MCF 10A (cell line): ENCODE measurements at regions of chr1 and their contacts with region 1.

Region 1: GRCh38 chr1:183685112-183685713 is 32.1 kb upstream of the APOBEC4 start:
- DNase-seq: peak; percentile 71
- H3K4me3 Mint-ChIP-seq: no peak overlapping the region
- H3K27ac Mint-ChIP-seq: no peak overlapping the region
- H3K4me1 Mint-ChIP-seq: no peaks in the 10 kb centered on the region
- H3K27me3 Mint-ChIP-seq: no peaks in the 10 kb centered on the region
- CTCF ChIP-seq: peak; percentile 88

Region 2: DNA sequence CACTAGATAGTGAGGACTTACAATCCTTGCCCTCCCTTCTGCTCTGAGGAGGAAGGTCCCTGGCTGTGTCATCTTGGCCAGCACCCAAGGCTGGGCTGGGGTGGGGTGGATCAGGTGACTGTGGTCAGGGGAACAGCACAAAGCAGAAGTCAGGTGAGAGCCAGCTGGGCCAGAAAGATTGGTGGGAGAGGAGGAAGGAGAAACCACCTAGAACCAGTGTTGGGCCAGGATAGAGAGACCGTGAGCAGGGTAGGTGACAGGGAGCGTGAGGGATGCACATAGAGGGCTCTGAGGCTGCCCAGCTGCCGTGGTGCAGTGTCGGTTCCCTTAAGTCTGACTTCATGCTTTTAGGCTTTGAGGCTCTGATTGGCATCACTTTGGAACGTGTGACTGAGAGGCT is 117.6 kb before region 1 on chr1:
- CTCF ChIA-PET with region 1: interaction called, 10 read pairs
- POLR2A ChIA-PET with region 1: no interaction called
- intact Hi-C with region 1: no loop called
- DNase-seq: peak; percentile 71
- H3K4me3 Mint-ChIP-seq: no peak overlapping the region
- H3K27ac Mint-ChIP-seq: peak overlapping the region; percentile 10
- H3K4me1 Mint-ChIP-seq: peaks cover 32% of the 10 kb centered on the region
- H3K27me3 Mint-ChIP-seq: no peaks in the 10 kb centered on the region
- CTCF ChIP-seq: no peak

Region 3: GRCh38 chr1:183635606-183636333 is 49.4 kb before region 1 on chr1 and contains the start of gene ARPC5:
- CTCF ChIA-PET with region 1: interaction called, 21 read pairs
- POLR2A ChIA-PET with region 1: interaction called, 6 read pairs
- intact Hi-C with region 1: no loop called
- DNase-seq: peak; percentile 99
- H3K4me3 Mint-ChIP-seq: peak within 1 kb of the TSS; percentile 100
- H3K27ac Mint-ChIP-seq: peak within 1 kb of the TSS; percentile 97
- H3K4me1 Mint-ChIP-seq: peaks cover 15% of the 10 kb centered on the region
- H3K27me3 Mint-ChIP-seq: no peaks in the 10 kb centered on the region
- CTCF ChIP-seq: no peak
- total RNA-seq, gene ARPC5: 195 and 240 TPM in 2 replicates

Region 4: GRCh38 chr1:183670178-183670577 is 15.0 kb before region 1 on chr1:
- CTCF ChIA-PET with region 1: interaction called, 61 read pairs
- POLR2A ChIA-PET with region 1: interaction called, 5 read pairs
- intact Hi-C with region 1: no loop called
- DNase-seq: no peak
- H3K4me3 Mint-ChIP-seq: no peak overlapping the region
- H3K27ac Mint-ChIP-seq: no peak overlapping the region
- H3K4me1 Mint-ChIP-seq: no peaks in the 10 kb centered on the region
- H3K27me3 Mint-ChIP-seq: no peaks in the 10 kb centered on the region
- CTCF ChIP-seq: no peak

Region 5: DNA sequence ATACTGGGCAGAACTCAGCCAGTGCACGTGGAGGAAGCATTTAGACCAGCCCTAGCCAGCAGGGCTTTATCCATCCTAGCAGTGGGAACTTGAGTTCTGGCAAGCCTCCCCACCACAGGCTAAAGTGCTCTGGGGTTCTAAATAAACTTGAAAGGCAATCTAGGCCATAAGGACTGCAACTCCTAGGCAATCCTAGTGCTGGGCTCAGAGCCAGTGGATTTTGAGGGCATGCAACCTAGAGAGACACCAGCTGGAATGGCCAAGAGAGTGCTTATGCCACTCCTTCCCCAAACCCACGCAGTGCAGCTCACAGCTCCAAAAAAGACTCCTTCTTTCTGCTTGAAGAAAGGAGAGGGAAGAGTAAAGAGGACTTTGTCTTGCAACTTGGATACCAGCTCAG is 38.4 kb after region 1 on chr1:
- CTCF ChIA-PET with region 1: interaction called, 10 read pairs
- POLR2A ChIA-PET with region 1: no interaction called
- intact Hi-C with region 1: no loop called
- DNase-seq: no peak
- H3K4me3 Mint-ChIP-seq: no peak overlapping the region
- H3K27ac Mint-ChIP-seq: no peak overlapping the region
- H3K4me1 Mint-ChIP-seq: no peaks in the 10 kb centered on the region
- H3K27me3 Mint-ChIP-seq: no peaks in the 10 kb centered on the region
- CTCF ChIP-seq: no peak

Region 6: DNA sequence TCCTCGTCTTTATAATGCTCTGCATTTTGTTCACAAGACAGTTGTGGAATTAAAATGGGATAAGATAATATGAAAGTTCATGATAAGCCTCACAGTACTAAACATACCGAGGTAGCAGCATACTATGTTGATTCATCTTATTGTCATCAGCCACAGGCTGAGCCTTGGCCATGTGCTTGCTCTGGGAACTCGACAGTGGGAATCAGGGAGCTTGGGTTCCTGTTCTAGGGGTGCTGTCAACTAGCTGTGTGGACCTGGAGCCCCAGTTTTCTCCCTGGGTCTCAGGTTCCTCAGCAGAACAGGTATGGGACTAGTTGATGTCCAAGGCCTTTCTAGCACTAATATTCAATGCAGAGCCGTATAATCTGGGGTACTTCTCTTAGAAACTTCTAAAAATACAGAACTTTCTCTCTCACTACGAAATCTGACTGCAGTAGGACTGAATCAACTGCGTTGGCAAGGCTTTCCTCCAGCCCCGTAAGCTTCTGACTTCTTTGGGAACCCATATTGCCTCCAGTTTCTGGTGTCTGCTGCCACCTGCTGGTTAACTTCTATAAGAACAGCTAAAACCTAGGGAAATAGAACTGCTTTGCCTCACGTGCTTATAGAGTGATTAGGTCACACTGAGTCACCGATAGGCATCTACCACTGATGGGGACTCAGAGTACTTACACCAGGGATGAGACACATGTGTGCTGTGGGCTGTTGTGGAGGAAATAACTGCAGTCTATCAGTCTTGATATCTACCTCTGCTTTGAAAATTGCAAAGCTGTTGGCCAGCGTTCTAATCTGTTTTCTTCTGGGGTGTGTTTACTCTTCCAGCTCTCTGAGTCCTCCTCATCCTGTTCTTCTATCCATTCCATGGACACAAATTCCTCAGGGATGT is 230.7 kb after region 1 on chr1:
- CTCF ChIA-PET with region 1: interaction called, 60 read pairs
- POLR2A ChIA-PET with region 1: interaction called, 8 read pairs
- intact Hi-C with region 1: loop called (anchors 1 kb)
- DNase-seq: peak; percentile 99
- H3K4me3 Mint-ChIP-seq: peak overlapping the region; percentile 27
- H3K27ac Mint-ChIP-seq: peak overlapping the region; percentile 55
- H3K4me1 Mint-ChIP-seq: peaks cover 13% of the 10 kb centered on the region
- H3K27me3 Mint-ChIP-seq: no peaks in the 10 kb centered on the region
- CTCF ChIP-seq: peak; percentile 90

Region 7: DNA sequence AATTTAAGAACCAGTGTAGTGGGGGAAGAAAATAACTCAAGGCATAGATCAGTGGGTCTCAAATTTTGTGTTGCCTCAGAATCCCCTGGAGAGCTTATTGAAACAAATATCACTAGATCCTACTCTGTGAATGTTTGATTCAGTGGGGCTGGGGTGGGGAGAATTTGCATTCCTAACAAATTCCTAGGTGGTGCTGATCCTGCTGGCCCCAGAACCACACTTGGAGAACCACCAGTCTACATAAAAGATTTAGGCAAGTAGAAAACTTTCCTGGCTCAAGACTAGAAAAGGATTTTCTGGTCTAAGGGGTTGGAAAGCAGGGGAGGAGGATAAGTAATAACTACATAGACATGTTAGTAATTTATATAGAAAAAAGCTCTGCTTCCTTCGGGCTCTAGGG is 667.6 kb after region 1 on chr1:
- CTCF ChIA-PET with region 1: no interaction called
- POLR2A ChIA-PET with region 1: no interaction called
- intact Hi-C with region 1: no loop called
- DNase-seq: no peak
- H3K4me3 Mint-ChIP-seq: no peak overlapping the region
- H3K27ac Mint-ChIP-seq: no peak overlapping the region
- H3K4me1 Mint-ChIP-seq: no peaks in the 10 kb centered on the region
- H3K27me3 Mint-ChIP-seq: no peaks in the 10 kb centered on the region
- CTCF ChIP-seq: no peak